Spleen (tissue), 13 donors: ENCODE measurements at regions of chr3 and their contacts with region 1.

Region 1: DNA sequence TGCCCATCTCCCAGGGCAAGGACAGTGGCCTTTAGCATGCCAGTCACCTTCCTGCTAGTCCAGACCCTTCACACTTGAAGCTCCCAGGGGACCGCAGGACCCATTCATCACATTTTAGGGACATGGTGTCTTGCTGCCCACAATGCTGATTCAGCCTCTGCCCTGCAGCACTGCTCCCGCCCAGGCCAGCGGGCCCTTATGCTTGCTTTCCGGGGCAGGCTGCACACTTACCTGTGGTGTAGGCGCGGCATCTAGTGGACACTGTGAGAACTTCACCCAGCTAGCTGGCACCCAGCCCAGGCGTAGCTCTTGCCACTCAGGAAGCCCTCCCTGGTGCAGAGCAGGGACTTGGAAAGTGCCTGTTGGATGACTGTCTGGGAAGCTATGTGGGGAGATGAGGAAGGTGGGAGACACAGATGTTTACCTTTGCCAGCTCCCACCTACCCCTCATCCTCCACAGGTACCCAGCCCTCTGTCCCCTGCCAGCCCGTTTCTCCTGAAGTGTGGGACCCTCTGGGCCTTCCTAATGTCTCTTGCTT is 26.2 kb upstream of the NR2C2 start:
- DNase-seq: peak; percentile 95
- H3K4me3 ChIP-seq: no peak overlapping the region
- H3K27ac ChIP-seq: peak overlapping the region in 2 of 8 donors; percentile 14 to 43
- H3K4me1 ChIP-seq: peaks cover 6 to 17% (median 11%) of the 10 kb centered on the region in 6 donors
- H3K27me3 ChIP-seq: no peaks in the 10 kb centered on the region
- CTCF ChIP-seq: peak; percentile 94 to 99 (median 98)
- POLR2A ChIP-seq: no peak

Region 2: GRCh38 chr3:14672588-14672987 is 248.6 kb before region 1 on chr3:
- intact Hi-C with region 1: loop called (anchors 5 kb)
- DNase-seq: no peak
- H3K4me3 ChIP-seq: no peak overlapping the region
- H3K27ac ChIP-seq: no peak overlapping the region
- H3K4me1 ChIP-seq: no peaks in the 10 kb centered on the region
- H3K27me3 ChIP-seq: no peaks in the 10 kb centered on the region
- CTCF ChIP-seq: no peak
- POLR2A ChIP-seq: no peak

Region 3: DNA sequence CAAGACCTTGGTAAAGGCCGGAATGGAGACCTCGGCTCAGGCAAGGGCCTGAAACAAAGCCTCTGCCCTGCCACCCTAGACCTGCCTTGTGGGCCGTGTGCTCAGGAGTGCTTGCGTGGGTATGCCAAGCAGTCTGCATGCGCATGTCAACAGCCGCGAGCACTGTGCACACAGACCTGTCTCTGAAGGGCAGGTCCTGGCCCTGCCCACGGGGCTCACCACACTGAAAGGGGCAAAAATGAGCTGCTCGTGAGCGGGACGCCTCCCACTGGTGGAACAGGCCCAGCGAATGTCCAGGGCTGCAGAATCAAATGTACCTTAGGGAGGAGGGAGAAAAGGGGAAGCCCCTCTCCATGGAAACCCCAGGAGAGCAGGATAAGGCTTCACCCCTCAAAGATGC is 146.7 kb before region 1 on chr3:
- intact Hi-C with region 1: no loop called
- DNase-seq: peak; percentile 48
- H3K4me3 ChIP-seq: no peak overlapping the region
- H3K27ac ChIP-seq: no peak overlapping the region
- H3K4me1 ChIP-seq: no peaks in the 10 kb centered on the region
- H3K27me3 ChIP-seq: no peaks in the 10 kb centered on the region
- CTCF ChIP-seq: no peak
- POLR2A ChIP-seq: no peak

Region 4: DNA sequence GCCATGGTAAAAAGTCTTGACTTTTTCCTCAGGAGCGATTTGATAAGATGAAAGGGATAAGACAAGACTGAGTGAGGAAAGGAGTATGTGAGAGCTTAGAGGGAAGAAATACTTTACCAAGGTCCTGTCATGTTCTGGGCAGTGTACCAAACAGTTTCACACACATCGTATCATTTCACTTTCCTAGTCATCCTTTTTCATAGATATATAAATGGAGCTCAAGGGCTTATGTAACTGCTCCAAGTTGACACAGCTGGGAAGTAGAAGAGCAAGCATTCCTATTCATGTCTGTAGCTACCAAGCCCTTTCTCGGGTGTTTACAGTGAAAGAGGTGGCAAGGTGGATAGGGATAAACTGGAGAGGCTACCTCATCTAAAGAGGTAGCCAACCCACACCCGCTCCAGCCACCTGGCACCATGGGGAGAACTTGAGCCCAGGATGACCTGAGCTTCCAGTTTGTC is 86.6 kb after region 1 on chr3:
- intact Hi-C with region 1: no loop called
- DNase-seq: no peak
- H3K4me3 ChIP-seq: no peak overlapping the region
- H3K27ac ChIP-seq: no peak overlapping the region
- H3K4me1 ChIP-seq: peaks cover 0 to 2% (median 0%) of the 10 kb centered on the region in 6 donors
- H3K27me3 ChIP-seq: no peaks in the 10 kb centered on the region
- CTCF ChIP-seq: no peak
- POLR2A ChIP-seq: no peak